GM12878 (cell line): ENCODE measurements at regions of chr6 and their contacts with region 1.

Region 1: GRCh38 chr6:32700391-32701040 is 34.1 kb upstream of the HLA-DQB1 start:
- DNase-seq: no peak
- ATAC-seq: peak; percentile 93
- H3K4me3 ChIP-seq: no peak overlapping the region
- H3K27ac ChIP-seq: no peak overlapping the region
- H3K4me1 ChIP-seq: no peaks in the 10 kb centered on the region
- H3K27me3 ChIP-seq: peaks cover 0 to 3% of the 10 kb centered on the region in 2 experiments; a peak in 2 of 4 replicates
- CTCF ChIP-seq: peak; percentile 65
- EP300 ChIP-seq: no peak
- POLR2A ChIP-seq: no peak
- RAD21 ChIP-seq: peak; percentile 76

Region 2: GRCh38 chr6:32244946-32245398 is 455.5 kb before region 1 on chr6:
- CTCF ChIA-PET with region 1: interaction called, 11 read pairs
- POLR2A ChIA-PET with region 1: no interaction called
- RAD21 ChIA-PET with region 1: interaction called, 5 read pairs
- SMC1A ChIA-PET with region 1: interaction called, 7 read pairs
- in situ Hi-C with region 1: loop called (anchors 5 kb)
- intact Hi-C with region 1: loop called (anchors 10 kb)
- DNase-seq: no peak
- ATAC-seq: peak; percentile 87
- H3K4me3 ChIP-seq: no peak overlapping the region; the same call in 1 of the 2 replicates
- H3K27ac ChIP-seq: no peak overlapping the region
- H3K4me1 ChIP-seq: no peaks in the 10 kb centered on the region
- H3K27me3 ChIP-seq: no peaks in the 10 kb centered on the region; a peak in 1 of 4 replicates
- CTCF ChIP-seq: peak; percentile 85 to 92 (median 87)
- EP300 ChIP-seq: no peak
- POLR2A ChIP-seq: no peak
- RAD21 ChIP-seq: peak; percentile 86

Region 3: GRCh38 chr6:32413427-32414047 is 287.0 kb before region 1 on chr6:
- CTCF ChIA-PET with region 1: interaction called, 180 read pairs
- POLR2A ChIA-PET with region 1: no interaction called
- RAD21 ChIA-PET with region 1: interaction called, 72 read pairs
- SMC1A ChIA-PET with region 1: interaction called, 70 read pairs
- in situ Hi-C with region 1: no loop called
- intact Hi-C with region 1: loop called (anchors 1 kb)
- DNase-seq: peak; percentile 40
- ATAC-seq: peak; percentile 94
- H3K4me3 ChIP-seq: no peak overlapping the region
- H3K27ac ChIP-seq: no peak overlapping the region
- H3K4me1 ChIP-seq: no peaks in the 10 kb centered on the region
- H3K27me3 ChIP-seq: no peaks in the 10 kb centered on the region; a peak in 2 of 4 replicates
- CTCF ChIP-seq: peak; percentile 84 to 96 (median 94)
- EP300 ChIP-seq: no peak
- POLR2A ChIP-seq: no peak
- RAD21 ChIP-seq: peak; percentile 83

Region 4: DNA sequence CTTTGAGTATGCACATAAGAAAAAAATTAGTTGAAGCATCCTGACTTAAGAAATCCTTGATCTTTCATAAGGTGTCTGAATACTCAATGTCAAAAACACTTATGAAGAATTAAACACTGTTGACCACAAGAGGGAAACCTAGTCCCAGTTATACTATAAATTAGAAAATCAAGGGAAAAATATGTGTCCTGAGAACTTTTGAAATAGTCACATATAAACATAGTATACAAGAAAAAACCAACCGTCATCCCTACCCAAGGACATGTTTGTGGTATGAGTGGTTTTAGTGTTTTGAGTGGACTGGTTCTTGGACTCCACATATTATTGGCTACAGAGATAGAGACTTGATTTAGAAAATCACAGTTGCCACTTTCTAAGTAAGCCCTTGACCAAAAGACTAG is 268.5 kb before region 1 on chr6:
- CTCF ChIA-PET with region 1: interaction called, 160 read pairs
- POLR2A ChIA-PET with region 1: interaction called, 3 read pairs
- RAD21 ChIA-PET with region 1: interaction called, 39 read pairs
- SMC1A ChIA-PET with region 1: interaction called, 75 read pairs
- in situ Hi-C with region 1: loop called (anchors 5 kb)
- intact Hi-C with region 1: loop called (anchors 1 kb)
- DNase-seq: no peak
- ATAC-seq: peak; percentile 55
- H3K4me3 ChIP-seq: no peak overlapping the region
- H3K27ac ChIP-seq: no peak overlapping the region
- H3K4me1 ChIP-seq: peaks cover 10% of the 10 kb centered on the region
- H3K27me3 ChIP-seq: no peaks in the 10 kb centered on the region
- CTCF ChIP-seq: peak in 2 of 3 experiments; percentile 41 to 62; a peak in 4 of 6 replicates
- EP300 ChIP-seq: no peak
- POLR2A ChIP-seq: no peak
- RAD21 ChIP-seq: peak; percentile 76

Region 5: DNA sequence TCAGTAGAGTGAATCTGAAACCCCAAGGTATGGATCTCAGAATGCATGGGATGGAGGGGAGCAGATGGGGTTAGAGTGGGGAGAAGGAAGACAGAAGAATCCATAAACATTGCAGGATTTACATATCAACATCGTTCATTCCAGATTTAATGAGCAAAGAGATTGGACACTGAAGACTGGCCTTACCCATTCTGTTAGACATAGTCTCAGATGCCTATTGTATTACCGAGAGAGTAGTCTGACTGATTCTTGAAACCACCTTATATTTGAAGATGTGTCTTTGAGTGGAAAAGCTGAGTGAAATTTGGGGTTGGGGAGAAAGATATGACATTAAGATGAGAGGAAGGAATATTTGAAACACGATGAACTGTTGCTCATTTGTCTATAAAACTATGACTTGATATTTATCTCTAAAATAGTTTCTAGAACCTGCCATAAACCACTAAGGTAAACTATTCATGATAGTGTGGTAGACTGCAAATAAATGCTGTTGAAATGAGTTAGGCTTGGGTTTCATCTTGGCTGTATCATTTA is 255.1 kb before region 1 on chr6:
- CTCF ChIA-PET with region 1: interaction called, 16 read pairs
- POLR2A ChIA-PET with region 1: no interaction called
- RAD21 ChIA-PET with region 1: interaction called, 7 read pairs
- SMC1A ChIA-PET with region 1: interaction called, 4 read pairs
- in situ Hi-C with region 1: no loop called
- intact Hi-C with region 1: no loop called
- DNase-seq: no peak
- ATAC-seq: peak; percentile 44
- H3K4me3 ChIP-seq: no peak overlapping the region
- H3K27ac ChIP-seq: no peak overlapping the region
- H3K4me1 ChIP-seq: peaks cover 4% of the 10 kb centered on the region; the same call in 1 of the 2 replicates
- H3K27me3 ChIP-seq: no peaks in the 10 kb centered on the region
- CTCF ChIP-seq: no peak
- EP300 ChIP-seq: no peak
- POLR2A ChIP-seq: no peak; the same call in 1 of the 2 replicates
- RAD21 ChIP-seq: no peak

Region 6: DNA sequence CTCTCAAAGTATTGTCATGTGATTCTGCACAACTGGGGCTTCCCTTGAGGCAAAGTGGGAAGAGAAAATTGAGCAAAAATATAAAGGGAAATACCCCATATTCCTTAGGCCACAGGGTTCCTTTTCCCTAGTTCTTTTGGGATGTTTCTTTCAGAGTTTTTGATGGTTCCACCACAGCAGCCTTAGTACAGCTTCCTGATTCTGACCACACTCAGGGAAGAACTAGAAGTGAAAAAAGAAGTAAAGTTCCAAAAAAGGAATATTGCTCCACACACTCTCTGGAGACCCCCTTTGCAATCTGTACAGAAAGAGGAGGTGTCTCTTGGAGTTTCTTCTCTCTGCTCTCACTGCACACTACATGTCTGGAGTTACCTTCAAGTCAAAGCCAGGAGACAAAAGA is 12.7 kb after region 1 on chr6:
- CTCF ChIA-PET with region 1: interaction called, 8 read pairs
- POLR2A ChIA-PET with region 1: no interaction called
- RAD21 ChIA-PET with region 1: interaction called, 4 read pairs
- SMC1A ChIA-PET with region 1: interaction called, 20 read pairs
- in situ Hi-C with region 1: no loop called
- intact Hi-C with region 1: no loop called
- DNase-seq: no peak
- ATAC-seq: no peak
- H3K4me3 ChIP-seq: no peak overlapping the region
- H3K27ac ChIP-seq: no peak overlapping the region
- H3K4me1 ChIP-seq: no peaks in the 10 kb centered on the region
- H3K27me3 ChIP-seq: no peaks in the 10 kb centered on the region
- CTCF ChIP-seq: no peak
- EP300 ChIP-seq: no peak
- POLR2A ChIP-seq: no peak
- RAD21 ChIP-seq: no peak

Region 7: DNA sequence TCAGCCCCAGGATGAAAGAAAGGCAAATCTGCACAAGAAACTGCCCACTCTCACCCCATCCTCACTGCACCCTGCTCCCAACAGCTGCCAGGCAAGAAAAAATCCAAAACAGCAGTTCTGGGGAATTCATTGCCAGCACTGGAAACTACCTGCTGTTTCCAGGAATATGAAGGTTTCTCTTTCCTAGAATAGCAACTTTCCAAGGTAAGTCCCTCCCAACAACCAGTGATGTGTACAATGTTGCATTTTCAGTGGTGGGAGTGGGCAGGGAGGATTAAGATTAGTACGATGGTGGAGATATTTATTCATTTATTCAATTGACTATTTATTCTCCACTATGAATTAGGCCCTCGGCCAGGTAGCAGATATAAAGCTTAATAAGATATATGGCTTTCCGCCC is 126.5 kb after region 1 on chr6:
- CTCF ChIA-PET with region 1: no interaction called
- POLR2A ChIA-PET with region 1: no interaction called
- RAD21 ChIA-PET with region 1: no interaction called
- SMC1A ChIA-PET with region 1: no interaction called
- in situ Hi-C with region 1: no loop called
- intact Hi-C with region 1: no loop called
- DNase-seq: no peak
- ATAC-seq: no peak
- H3K4me3 ChIP-seq: no peak overlapping the region
- H3K27ac ChIP-seq: no peak overlapping the region
- H3K4me1 ChIP-seq: no peaks in the 10 kb centered on the region
- H3K27me3 ChIP-seq: no peaks in the 10 kb centered on the region
- CTCF ChIP-seq: no peak
- EP300 ChIP-seq: no peak
- POLR2A ChIP-seq: no peak
- RAD21 ChIP-seq: no peak